Lower lobe of right lung (tissue), 2 donors: ENCODE measurements at regions of chr20 and their contacts with region 1.

Region 1: DNA sequence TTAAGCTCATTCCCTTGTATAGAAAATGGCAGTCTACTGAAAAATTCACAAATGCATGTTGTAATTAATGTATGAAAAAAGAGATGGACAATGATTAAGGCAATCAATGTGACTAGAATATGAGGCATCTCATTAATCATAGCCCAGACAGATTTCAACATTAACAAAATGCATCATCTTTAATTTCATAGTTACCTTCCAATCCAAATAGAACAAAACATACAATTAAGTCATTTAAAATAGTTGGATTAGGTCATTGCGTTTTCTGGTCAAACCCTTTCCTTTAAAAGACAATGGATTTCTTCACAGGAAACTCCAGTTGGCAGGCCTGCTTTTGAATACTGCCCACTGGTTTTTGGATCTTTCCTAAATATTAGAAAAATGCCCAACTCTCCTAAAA is 203.9 kb downstream of the HAO1 start:
- DNase-seq: no peak
- ATAC-seq: no peak
- H3K4me3 ChIP-seq: no peak overlapping the region
- H3K27ac ChIP-seq: no peak overlapping the region
- H3K4me1 ChIP-seq: no peaks in the 10 kb centered on the region
- H3K27me3 ChIP-seq: no peaks in the 10 kb centered on the region
- CTCF ChIP-seq: no peak

Region 2: GRCh38 chr20:7790189-7790588 is 53.9 kb after region 1 on chr20:
- intact Hi-C with region 1: loop called (anchors 10 kb)
- DNase-seq: no peak
- ATAC-seq: no peak
- H3K4me3 ChIP-seq: no peak overlapping the region
- H3K27ac ChIP-seq: no peak overlapping the region
- H3K4me1 ChIP-seq: no peaks in the 10 kb centered on the region
- H3K27me3 ChIP-seq: no peaks in the 10 kb centered on the region
- CTCF ChIP-seq: no peak